Sciatic nerve (tissue), 2 donors: ENCODE measurements at regions of chr2 and their contacts with region 1.

Region 1: GRCh38 chr2:237572021-237572741 is 5.8 kb downstream of the PRLH start:
- DNase-seq: peak; percentile 97
- ATAC-seq: peak; percentile 96

Region 2: DNA sequence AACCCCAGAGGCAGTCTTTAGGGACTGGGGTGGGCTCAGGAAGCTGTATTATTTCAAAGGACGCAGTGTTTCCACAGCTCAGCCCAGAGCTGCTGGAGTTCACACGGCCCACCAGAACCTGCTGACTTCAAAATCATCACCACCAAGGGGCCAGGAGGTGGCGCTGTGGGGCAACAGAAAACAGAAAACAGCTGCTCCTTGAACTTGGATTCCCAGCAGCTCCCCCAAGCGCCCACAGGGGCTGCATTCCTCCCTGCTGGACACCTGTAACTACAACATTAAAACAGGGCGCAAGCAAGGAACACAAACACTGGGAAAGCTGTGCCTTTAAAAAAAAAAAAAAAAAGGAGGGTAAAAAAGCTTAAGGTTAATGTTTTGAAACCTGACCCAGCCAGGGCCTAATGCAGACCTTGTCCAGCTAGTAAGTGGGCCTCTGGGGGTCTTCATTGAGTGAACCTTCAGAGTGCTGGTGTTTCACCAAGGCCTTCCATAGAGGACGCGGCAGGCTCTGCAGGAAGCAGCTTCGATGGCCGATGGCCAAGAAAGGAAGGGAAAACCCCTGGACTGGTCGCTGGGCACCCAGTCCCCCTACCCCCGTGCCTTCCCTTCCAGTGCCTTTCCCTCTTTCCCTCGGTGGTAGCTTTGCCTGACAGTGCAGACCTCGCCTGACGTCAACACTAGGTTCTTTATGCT is 59.3 kb before region 1 on chr2:
- intact Hi-C with region 1: loop called (anchors 5 kb)
- DNase-seq: peak; percentile 91
- ATAC-seq: peak; percentile 86

Region 3: GRCh38 chr2:237558906-237559641 is 13.1 kb before region 1 on chr2:
- intact Hi-C with region 1: no loop called
- DNase-seq: peak; percentile 87
- ATAC-seq: peak; percentile 86

Region 4: DNA sequence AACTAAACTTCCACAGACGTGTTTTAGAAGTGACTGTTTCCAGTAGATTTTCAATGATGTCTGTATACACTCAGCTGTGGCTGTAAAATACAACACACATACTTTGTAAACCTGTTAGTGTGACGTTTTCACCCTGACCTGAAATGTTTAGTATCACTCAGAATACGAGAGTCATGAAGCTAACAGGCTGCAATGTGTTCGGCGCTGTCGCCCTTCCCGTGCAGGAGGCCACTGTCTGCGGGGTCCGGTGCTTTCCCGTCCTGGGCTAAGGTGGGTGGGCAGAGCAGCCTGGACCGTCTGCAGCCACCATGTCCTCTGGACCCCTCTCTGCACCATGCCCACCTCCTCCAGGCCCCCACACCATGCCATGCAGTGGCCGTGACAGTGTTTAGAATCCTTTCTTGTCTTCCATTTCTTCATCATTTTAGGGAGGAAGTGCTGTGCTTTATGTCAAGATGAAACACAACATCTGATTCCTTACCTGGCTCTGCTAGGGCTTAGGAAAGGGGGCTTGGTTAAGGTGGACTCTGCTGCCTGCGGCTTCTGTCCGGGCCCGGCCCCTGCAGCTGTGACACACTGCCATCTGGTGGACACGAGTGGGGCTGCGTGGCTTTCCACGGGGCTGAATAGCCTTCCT is 172.6 kb after region 1 on chr2:
- intact Hi-C with region 1: loop called (anchors 5 kb)
- DNase-seq: peak; percentile 90
- ATAC-seq: peak; percentile 94